HepG2 (cell line): ENCODE measurements at regions of chr17 and their contacts with region 1.

Region 1: DNA sequence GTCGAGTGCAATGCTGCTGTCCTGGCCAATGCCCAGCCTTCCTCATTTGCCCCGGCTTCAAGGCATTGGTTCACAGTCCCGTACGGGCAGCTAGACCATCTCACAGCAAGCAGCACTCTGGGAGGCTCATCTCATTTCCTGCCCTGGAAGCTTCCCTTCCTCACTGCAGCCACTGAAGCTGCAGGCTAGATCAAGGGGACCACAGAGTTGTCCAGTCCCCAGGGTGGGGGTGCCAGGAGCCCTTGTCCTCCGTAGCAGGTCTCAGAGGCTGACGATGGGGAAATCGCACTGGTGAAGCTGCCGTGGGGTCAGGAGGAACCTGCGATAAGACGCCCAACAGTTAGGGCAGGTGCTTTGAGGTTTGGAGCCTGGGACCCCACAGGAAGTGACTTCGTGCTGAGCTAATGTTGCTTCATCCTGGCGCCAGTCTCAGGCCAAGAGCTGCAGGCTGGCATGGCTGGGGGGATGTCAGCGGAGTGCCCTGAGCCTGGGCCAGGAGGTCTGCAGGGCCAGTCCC is at the start of gene SPNS3:
- DNase-seq: no peak
- ATAC-seq: no peak; the same call in 1 of the 3 replicates
- H3K4me3 ChIP-seq: no peak within 1 kb of the TSS
- H3K27ac ChIP-seq: no peak within 1 kb of the TSS
- H3K4me1 ChIP-seq: peaks cover 6% of the 10 kb centered on the region
- H3K27me3 ChIP-seq: peaks cover 0 to 7% of the 10 kb centered on the region in 2 experiments; a peak in 2 of 5 replicates
- CTCF ChIP-seq: no peak
- EP300 ChIP-seq: no peak
- POLR2A ChIP-seq: no peak
- RAD21 ChIP-seq: no peak
- total RNA-seq, gene SPNS3: not detected in 2 replicates

Region 2: DNA sequence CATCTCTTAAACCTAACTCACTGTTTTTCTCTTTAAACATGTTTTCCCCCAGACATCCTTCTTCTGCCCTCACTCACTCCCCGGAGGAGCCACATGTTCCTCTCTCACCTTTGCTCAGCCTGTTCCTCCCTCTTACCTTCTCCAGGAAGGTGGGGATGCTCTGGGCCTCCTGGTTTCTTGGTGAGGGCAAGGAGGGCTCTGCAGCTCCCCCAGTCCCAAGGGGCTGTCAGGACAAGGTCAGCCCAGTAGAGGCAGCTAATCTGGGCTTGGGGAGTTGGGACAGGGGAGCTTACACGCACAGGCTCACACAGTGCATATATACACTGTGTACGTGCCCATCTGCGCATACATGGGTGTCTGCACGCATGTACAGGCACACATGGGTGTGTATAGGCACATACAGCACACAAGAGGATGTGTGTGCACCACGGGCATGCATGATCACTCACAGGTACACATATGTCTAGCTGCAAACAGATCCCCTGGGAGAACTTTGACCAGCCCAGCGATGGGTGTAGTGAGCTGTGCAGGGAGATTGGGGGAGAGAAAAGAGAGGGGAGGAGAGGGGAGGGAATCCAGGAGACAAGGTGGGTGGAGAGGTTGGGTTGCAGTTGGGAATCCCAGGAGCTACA is 28.4 kb before region 1 on chr17:
- CTCF ChIA-PET with region 1: no interaction called
- POLR2A ChIA-PET with region 1: no interaction called
- in situ Hi-C with region 1: no loop called
- intact Hi-C with region 1: no loop called
- DNase-seq: no peak
- ATAC-seq: peak; percentile 83
- H3K4me3 ChIP-seq: no peak overlapping the region
- H3K27ac ChIP-seq: no peak overlapping the region
- H3K4me1 ChIP-seq: peaks cover 18% of the 10 kb centered on the region
- H3K27me3 ChIP-seq: no peaks in the 10 kb centered on the region
- CTCF ChIP-seq: no peak
- EP300 ChIP-seq: no peak
- POLR2A ChIP-seq: no peak
- RAD21 ChIP-seq: no peak

Region 3: GRCh38 chr17:4480929-4481898 is 47.6 kb after region 1 on chr17:
- CTCF ChIA-PET with region 1: no interaction called
- POLR2A ChIA-PET with region 1: no interaction called
- in situ Hi-C with region 1: loop called (anchors 5 kb)
- intact Hi-C with region 1: no loop called
- DNase-seq: no peak
- ATAC-seq: peak; percentile 59
- H3K4me3 ChIP-seq: peak overlapping the region; percentile 34 to 67 (median 37)
- H3K27ac ChIP-seq: peak overlapping the region; percentile 20
- H3K4me1 ChIP-seq: peaks cover 63% of the 10 kb centered on the region
- H3K27me3 ChIP-seq: peaks cover 1 to 44% of the 10 kb centered on the region in 2 experiments
- CTCF ChIP-seq: peak; percentile 24; the same call in 1 of the 2 replicates
- EP300 ChIP-seq: 0 out of 4 replicates have a peak, but pooled peaks of 1 of the 2 experiments have one; percentile 22
- POLR2A ChIP-seq: no peak
- RAD21 ChIP-seq: no peak

Region 4: GRCh38 chr17:5275287-5275686 is 841.7 kb after region 1 on chr17:
- CTCF ChIA-PET with region 1: no interaction called
- POLR2A ChIA-PET with region 1: no interaction called
- in situ Hi-C with region 1: no loop called
- intact Hi-C with region 1: loop called (anchors 5 kb)
- DNase-seq: no peak
- ATAC-seq: no peak
- H3K4me3 ChIP-seq: no peak overlapping the region
- H3K27ac ChIP-seq: no peak overlapping the region
- H3K4me1 ChIP-seq: peaks cover 7% of the 10 kb centered on the region
- H3K27me3 ChIP-seq: peaks cover 0 to 3% of the 10 kb centered on the region in 2 experiments; a peak in 2 of 5 replicates
- CTCF ChIP-seq: no peak
- EP300 ChIP-seq: no peak
- POLR2A ChIP-seq: no peak
- RAD21 ChIP-seq: no peak